Activated T-helper 2 cell treated with anti-CD3 and anti-CD28 coated beads, Interferon-gamma antibody, Interleukin-2, Interleukin-4, amounts not matched to agents 10 μg/mL and 5 μg/mL and 100 μg/mL, durations not matched to agents 14 hours and 24 hours and 36 hours (primary cell): ENCODE measurements at regions of chr2 and their contacts with region 1.

Region 1: DNA sequence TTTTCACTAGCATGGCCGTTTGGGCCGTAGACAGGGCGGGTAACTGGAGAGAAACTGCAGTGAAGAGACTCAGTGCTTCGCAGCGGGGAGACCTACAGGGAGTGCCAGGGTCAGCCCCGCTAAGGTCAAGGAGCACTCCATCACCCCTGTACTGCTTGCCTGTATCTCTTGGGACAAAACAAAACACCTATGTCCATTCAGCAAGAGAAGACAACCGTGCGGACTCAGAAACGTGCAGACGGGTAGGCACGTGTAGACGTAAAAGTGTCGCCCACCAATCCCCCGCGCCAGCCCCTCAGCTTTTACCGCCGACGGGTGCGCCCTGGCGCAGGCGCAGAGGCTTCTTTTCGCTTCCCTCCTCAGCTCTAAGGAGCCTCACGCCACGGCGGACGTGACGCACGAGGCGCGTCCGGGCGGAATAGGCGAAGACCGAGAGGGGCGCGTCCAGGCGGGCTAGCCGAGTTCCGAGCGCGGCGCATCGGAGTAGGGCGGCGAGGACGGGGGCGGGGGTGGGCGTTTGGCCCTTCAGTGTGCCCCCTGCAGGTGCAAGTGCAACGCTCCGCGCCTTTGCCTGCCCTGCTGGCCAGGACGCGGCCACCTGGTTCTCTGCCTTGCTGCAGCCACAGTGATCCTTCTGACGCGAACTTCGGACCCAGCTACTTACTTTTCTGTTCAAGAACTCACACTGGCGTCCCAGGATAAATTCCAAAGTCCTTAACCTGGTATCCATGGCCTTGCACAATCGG is 3.3 kb upstream of the SOS1 start:
- DNase-seq: peak; percentile 95
- H3K4me3 Mint-ChIP-seq: peak overlapping the region; percentile 97
- H3K27ac Mint-ChIP-seq: peak overlapping the region; percentile 96
- H3K4me1 Mint-ChIP-seq: peaks cover 49% of the 10 kb centered on the region
- H3K27me3 Mint-ChIP-seq: no peaks in the 10 kb centered on the region

Region 2: GRCh38 chr2:38653715-38654527 is 470.3 kb before region 1 on chr2:
- intact Hi-C with region 1: loop called (anchors 5 kb)
- DNase-seq: peak; percentile 49
- H3K4me3 Mint-ChIP-seq: peak overlapping the region; percentile 52
- H3K27ac Mint-ChIP-seq: peak overlapping the region; percentile 85
- H3K4me1 Mint-ChIP-seq: peaks cover 64% of the 10 kb centered on the region
- H3K27me3 Mint-ChIP-seq: no peaks in the 10 kb centered on the region

Region 3: DNA sequence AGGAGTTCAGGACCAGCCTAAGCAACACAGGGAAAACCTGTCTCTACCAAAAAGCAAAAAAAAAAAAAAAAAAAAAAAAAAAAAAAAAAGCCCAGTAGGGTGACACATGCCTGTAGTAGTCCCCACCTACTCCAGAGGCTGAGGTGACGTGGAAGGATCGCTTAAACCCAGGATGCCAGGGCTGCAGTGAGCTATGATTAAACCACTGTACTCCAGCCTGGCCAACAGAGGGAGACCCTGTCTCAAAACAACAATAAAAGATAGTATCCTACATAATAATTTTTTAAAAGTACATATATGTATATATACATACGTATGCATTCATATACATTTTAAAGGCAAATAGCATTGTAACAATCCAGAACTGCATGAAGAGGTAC is 55.0 kb before region 1 on chr2:
- intact Hi-C with region 1: loop called (anchors 2 kb)
- DNase-seq: no peak
- H3K4me3 Mint-ChIP-seq: no peak overlapping the region
- H3K27ac Mint-ChIP-seq: no peak overlapping the region
- H3K4me1 Mint-ChIP-seq: peaks cover 37% of the 10 kb centered on the region
- H3K27me3 Mint-ChIP-seq: no peaks in the 10 kb centered on the region

Region 4: DNA sequence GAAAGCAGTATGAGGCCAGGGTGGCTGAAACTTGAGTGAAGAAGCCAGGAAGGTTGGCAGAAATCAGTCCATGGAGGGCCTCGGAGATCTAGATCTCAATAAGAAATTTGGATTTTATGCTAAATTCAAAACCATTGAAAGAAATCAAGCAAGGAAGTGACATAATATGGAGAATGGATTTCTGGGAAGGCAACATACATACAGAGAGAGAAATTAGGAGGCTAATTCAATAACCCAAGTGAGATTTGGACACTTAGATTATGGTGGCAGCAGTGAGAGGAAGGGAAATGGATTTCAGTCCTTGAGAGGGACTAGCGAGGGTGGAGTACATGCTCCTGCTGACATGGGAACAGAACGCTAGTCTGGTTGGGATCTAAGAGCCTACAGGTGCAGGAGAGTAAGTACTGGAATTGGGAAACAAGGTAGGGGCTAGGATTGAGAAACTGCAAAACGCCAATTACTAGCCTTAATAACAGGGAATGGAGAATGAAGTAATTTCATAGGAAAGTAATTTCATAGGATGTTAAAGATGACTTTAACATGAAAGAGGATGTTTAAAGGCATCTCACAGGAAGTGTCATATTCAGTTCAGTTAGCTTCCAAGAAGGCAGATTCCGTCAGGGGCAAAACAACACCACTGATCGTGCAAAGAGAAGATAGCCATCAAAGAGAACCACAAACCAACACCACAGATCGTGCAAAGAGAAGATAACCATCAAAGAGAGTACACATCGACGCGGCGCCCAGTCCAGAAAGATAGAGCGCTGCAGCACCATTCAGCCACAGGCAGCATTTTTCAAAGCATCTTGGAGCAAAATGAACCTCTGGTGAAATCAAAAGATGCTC is 92.4 kb after region 1 on chr2:
- intact Hi-C with region 1: loop called (anchors 1 kb)
- DNase-seq: peak; percentile 87
- H3K4me3 Mint-ChIP-seq: peak overlapping the region; percentile 38
- H3K27ac Mint-ChIP-seq: peak overlapping the region; percentile 88
- H3K4me1 Mint-ChIP-seq: peaks cover 64% of the 10 kb centered on the region
- H3K27me3 Mint-ChIP-seq: no peaks in the 10 kb centered on the region

Region 5: DNA sequence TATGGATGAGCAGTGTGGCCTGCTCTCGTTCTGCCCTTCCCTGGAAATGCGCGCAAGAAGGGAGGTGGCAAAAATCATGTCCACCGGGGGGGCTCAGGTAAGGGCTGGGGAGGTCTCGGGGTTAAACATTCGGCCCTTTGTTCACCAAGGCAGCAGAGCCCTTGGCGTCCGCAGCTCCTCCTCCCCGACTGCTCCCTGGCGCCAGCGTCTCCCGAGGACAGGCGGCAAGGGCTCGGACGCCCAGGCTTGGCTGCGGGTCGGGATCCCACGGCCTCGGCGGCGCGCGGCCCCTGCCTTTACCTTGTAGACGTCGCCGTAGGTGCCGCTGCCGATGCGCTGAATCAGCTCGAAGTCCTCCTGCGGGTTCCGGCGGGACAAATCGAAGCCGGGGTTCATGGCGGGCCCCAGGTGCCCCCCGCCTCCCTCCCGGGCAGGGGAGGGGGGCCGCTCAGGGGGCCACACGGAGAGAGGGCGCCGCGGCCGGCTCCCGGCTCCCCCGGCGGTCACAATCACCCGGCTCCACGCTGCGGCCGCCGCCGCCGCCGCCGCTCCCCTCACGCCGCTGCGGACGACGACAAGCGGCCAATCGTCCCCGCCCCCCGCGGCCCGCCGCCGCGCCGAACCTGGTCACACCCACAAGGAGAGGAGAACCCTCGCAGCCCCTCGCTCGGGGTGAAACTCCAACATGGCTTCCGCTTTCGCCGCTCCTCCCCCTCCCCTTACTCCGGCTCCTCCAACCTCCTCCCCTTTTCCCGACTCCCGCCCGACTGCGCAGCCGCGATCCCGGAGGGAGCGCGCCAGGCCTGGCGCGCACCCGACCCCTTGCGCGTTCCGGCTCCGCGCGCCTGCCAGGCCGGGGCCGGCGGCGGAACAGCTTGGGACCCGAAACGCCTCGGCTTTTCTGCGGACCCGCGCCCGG is 312.7 kb after region 1 on chr2 and contains the start of gene MAP4K3:
- intact Hi-C with region 1: loop called (anchors 10 kb)
- DNase-seq: peak; percentile 66
- H3K4me3 Mint-ChIP-seq: peak within 1 kb of the TSS; percentile 89
- H3K27ac Mint-ChIP-seq: peak within 1 kb of the TSS; percentile 83
- H3K4me1 Mint-ChIP-seq: peaks cover 41% of the 10 kb centered on the region
- H3K27me3 Mint-ChIP-seq: no peaks in the 10 kb centered on the region
- total RNA-seq, gene MAP4K3: 19.3 and 22.7 TPM in 2 replicates

Region 6: GRCh38 chr2:39948016-39948719 is 824.0 kb after region 1 on chr2:
- intact Hi-C with region 1: loop called (anchors 10 kb)
- DNase-seq: no peak
- H3K4me3 Mint-ChIP-seq: peak overlapping the region; percentile 5
- H3K27ac Mint-ChIP-seq: peak overlapping the region; percentile 93
- H3K4me1 Mint-ChIP-seq: peaks cover 54% of the 10 kb centered on the region
- H3K27me3 Mint-ChIP-seq: no peaks in the 10 kb centered on the region